Activated B cell treated with CpG ODN at 0.5 μM for 24 hours (primary cell): ENCODE measurements at regions of chr11 and their contacts with region 1.

Region 1: GRCh38 chr11:96342961-96343711 is at the start of gene MAML2:
- DNase-seq: peak; percentile 72
- ATAC-seq: peak; percentile 88
- H3K4me3 Mint-ChIP-seq: peak within 1 kb of the TSS; percentile 98
- H3K27ac Mint-ChIP-seq: peak within 1 kb of the TSS; percentile 95
- H3K4me1 Mint-ChIP-seq: peaks cover 50% of the 10 kb centered on the region
- H3K27me3 Mint-ChIP-seq: no peaks in the 10 kb centered on the region
- CTCF ChIP-seq: no peak
- total RNA-seq, gene MAML2: 20.9 and 24.8 TPM in 2 replicates

Region 2: DNA sequence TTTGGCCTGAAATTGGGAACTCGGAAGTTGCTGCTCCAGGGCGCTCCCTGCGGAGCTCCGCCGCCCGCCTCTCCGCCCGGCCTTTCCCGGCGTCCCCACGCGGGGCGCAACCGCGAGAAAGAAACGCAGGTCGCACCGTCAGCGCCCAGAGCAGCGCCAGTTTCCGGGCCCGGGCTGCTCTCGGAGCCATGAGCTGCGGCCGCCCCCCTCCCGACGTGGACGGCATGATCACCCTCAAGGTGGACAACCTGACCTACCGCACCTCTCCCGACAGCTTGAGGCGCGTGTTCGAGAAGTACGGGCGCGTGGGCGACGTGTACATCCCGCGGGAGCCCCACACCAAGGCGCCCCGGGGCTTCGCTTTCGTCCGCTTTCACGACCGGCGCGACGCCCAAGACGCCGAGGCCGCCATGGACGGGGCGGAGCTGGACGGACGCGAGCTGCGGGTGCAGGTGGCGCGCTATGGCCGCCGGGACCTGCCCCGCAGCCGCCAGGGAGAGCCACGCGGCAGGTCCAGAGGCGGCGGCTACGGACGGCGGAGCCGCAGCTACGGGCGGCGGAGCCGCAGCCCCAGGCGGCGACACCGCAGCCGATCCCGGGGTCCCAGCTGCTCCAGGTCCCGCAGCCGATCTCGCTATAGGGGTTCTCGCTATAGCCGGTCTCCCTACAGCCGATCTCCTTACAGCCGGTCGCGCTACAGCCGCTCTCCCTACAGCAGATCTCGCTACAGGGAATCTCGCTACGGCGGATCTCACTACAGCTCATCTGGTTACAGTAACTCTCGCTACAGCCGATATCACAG is 1275.9 kb before region 1 on chr11:
- CTCF ChIA-PET with region 1: no interaction called
- POLR2A ChIA-PET with region 1: no interaction called
- intact Hi-C with region 1: loop called (anchors 1 kb)
- DNase-seq: peak; percentile 76
- ATAC-seq: peak; percentile 71
- H3K4me3 Mint-ChIP-seq: peak overlapping the region; percentile 93
- H3K27ac Mint-ChIP-seq: peak overlapping the region; percentile 99
- H3K4me1 Mint-ChIP-seq: peaks cover 29% of the 10 kb centered on the region
- H3K27me3 Mint-ChIP-seq: no peaks in the 10 kb centered on the region
- CTCF ChIP-seq: no peak

Region 3: DNA sequence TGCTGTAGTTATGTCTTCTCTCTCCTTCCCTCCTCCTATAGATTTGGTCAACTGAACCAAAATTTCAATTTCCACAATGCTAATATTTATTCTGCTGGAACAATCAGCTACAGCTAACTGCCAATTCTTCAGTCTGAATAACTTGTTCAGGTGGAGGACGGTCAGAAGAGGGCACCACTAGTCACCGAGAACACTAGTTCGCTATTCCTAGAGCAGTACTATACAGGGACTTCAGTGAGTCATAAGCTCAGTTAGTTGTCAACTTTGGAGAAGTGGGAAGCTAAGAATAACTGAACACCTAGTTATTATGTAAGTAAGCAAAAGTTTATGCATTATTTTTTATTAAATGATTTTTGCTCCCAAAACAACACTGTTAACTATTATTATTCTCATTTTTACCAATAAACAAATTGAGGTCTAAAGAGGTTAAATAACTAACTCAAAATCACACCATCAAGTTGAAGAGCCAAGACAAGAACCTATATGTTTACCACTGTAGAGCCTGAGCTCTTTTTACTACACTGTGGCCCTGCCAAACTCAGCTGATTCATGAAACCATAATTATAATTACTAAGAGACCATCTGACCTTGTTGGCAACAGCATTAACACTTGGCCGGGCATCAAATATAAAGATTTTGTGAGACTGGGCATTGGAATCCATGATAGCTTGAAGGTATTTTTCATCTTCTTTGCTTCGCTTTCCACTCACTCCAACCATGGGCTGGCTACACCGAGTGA is 493.9 kb before region 1 on chr11:
- CTCF ChIA-PET with region 1: interaction called, 16 read pairs
- POLR2A ChIA-PET with region 1: no interaction called
- intact Hi-C with region 1: loop called (anchors 1 kb)
- DNase-seq: no peak
- ATAC-seq: peak; percentile 52
- H3K4me3 Mint-ChIP-seq: no peak overlapping the region
- H3K27ac Mint-ChIP-seq: no peak overlapping the region
- H3K4me1 Mint-ChIP-seq: no peaks in the 10 kb centered on the region
- H3K27me3 Mint-ChIP-seq: no peaks in the 10 kb centered on the region
- CTCF ChIP-seq: no peak

Region 4: DNA sequence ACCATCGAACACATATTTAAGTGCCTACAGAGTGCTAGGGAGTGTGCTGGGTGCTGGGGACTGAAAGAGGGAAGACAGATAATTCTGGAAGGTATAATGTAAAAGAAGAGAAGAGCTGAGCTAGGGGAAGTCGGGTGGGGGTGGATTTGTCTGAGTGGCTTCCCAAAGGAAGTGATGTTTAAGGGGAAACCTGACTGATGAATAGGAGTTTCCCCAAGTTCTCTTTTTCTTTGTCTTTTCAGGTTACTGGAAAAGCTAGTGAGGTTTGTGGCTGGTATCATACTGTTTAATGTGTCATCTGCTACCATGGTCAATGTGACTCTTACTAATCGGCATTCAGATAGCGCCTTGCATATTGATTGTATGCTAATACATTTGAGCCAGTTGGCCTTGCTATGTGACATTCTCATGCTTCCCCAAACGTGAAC is 267.6 kb before region 1 on chr11:
- CTCF ChIA-PET with region 1: interaction called, 8 read pairs
- POLR2A ChIA-PET with region 1: interaction called, 9 read pairs
- intact Hi-C with region 1: loop called (anchors 1 kb)
- DNase-seq: no peak
- ATAC-seq: peak; percentile 81
- H3K4me3 Mint-ChIP-seq: peak overlapping the region; percentile 66
- H3K27ac Mint-ChIP-seq: peak overlapping the region; percentile 83
- H3K4me1 Mint-ChIP-seq: peaks cover 44% of the 10 kb centered on the region
- H3K27me3 Mint-ChIP-seq: no peaks in the 10 kb centered on the region
- CTCF ChIP-seq: no peak

Region 5: DNA sequence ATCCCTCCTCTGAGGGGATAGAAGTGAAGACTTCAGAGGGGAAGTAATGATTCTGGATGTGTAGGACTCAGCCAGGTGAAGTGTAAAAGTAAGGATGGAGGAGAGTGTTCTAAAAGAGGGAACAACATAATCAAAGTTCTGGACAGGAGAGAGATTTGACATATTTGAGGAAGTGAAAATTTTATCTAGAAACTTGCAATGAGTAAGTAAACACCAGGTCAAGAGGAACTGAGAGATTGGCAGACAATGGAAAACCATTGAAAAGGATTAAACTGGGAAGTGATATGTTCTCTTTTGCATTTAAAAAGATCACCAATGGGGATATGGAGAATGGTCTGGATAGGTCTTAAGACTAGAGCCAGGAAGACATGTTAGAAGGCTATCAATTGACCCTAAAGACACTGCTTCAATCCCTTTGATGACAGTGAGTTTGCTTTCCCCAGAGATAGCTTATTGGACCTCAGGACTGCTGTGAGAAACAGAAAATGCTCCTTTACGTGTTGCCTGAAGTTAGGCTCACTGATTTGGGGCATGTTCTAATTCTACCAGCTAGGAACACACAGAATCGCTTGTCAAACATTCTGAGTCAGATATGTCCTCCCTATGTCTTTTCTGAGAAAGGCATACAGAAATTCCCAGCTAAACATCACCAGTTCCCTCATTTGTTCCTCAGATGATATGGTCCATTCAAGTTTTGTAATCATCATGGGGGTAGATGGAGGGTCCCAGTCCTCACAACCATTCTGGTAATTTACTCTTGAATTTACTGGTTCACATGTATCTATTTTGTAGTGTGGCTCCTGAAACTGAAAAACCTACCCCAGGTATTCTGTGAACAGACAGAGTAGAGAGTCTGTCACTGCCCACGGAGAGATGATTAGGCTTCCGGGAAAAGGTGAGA is 145.1 kb before region 1 on chr11:
- CTCF ChIA-PET with region 1: interaction called, 7 read pairs
- POLR2A ChIA-PET with region 1: interaction called, 4 read pairs
- intact Hi-C with region 1: loop called (anchors 1 kb)
- DNase-seq: no peak
- ATAC-seq: peak; percentile 87
- H3K4me3 Mint-ChIP-seq: peak overlapping the region; percentile 48
- H3K27ac Mint-ChIP-seq: peak overlapping the region; percentile 78
- H3K4me1 Mint-ChIP-seq: peaks cover 64% of the 10 kb centered on the region
- H3K27me3 Mint-ChIP-seq: no peaks in the 10 kb centered on the region
- CTCF ChIP-seq: no peak

Region 6: DNA sequence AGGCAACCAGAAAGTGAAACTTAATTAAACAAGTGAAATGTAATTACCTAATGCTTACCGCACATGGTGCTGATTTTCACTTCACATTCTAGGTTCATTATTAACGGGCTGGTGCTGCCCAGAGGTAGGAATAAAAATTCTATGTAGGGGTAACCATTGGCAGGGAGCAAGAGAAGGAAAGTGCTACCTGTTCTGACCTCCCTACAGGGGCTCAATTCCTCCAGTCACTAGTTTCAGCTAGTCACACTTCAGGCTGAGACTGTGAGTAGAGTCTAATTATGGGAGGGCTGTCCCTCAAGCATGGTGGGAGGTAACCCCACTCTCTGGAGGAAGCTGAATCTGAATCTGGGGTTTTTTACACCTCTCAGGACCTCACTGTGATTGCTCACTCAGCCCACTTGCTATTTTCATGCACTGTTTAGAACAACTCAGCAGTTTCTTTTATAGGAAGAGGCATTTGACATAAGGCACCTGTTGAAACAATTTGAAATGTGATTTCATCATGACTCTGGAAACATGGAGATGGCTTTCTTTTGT is 75.6 kb before region 1 on chr11:
- CTCF ChIA-PET with region 1: interaction called, 16 read pairs
- POLR2A ChIA-PET with region 1: interaction called, 27 read pairs
- intact Hi-C with region 1: loop called (anchors 1 kb)
- DNase-seq: no peak
- ATAC-seq: peak; percentile 98
- H3K4me3 Mint-ChIP-seq: peak overlapping the region; percentile 73
- H3K27ac Mint-ChIP-seq: peak overlapping the region; percentile 89
- H3K4me1 Mint-ChIP-seq: peaks cover 70% of the 10 kb centered on the region
- H3K27me3 Mint-ChIP-seq: no peaks in the 10 kb centered on the region
- CTCF ChIP-seq: no peak

Region 7: GRCh38 chr11:96389720-96390487 is 46.8 kb after region 1 on chr11 and contains the starts of genes CCDC82 and JRKL:
- CTCF ChIA-PET with region 1: interaction called, 20 read pairs
- POLR2A ChIA-PET with region 1: interaction called, 36 read pairs
- intact Hi-C with region 1: loop called (anchors 1 kb)
- DNase-seq: peak; percentile 99
- ATAC-seq: peak; percentile 98
- H3K4me3 Mint-ChIP-seq: peak within 1 kb of the TSS; percentile 94
- H3K27ac Mint-ChIP-seq: peak within 1 kb of the TSS; percentile 90
- H3K4me1 Mint-ChIP-seq: peaks cover 33% of the 10 kb centered on the region
- H3K27me3 Mint-ChIP-seq: no peaks in the 10 kb centered on the region
- CTCF ChIP-seq: no peak
- total RNA-seq, gene CCDC82: 22.6 and 33.8 TPM in 2 replicates
- total RNA-seq, gene JRKL: 9.6 and 9.8 TPM in 2 replicates

Region 8: GRCh38 chr11:97269527-97269926 is 926.4 kb after region 1 on chr11:
- CTCF ChIA-PET with region 1: no interaction called
- POLR2A ChIA-PET with region 1: no interaction called
- intact Hi-C with region 1: no loop called
- DNase-seq: no peak
- ATAC-seq: no peak
- H3K4me3 Mint-ChIP-seq: no peak overlapping the region
- H3K27ac Mint-ChIP-seq: no peak overlapping the region
- H3K4me1 Mint-ChIP-seq: no peaks in the 10 kb centered on the region
- H3K27me3 Mint-ChIP-seq: no peaks in the 10 kb centered on the region
- CTCF ChIP-seq: no peak